Activated CD8-positive, alpha-beta T cell treated with anti-CD3 and anti-CD28 coated beads, Interleukin-2, amount 10 ng/mL, durations not matched to agents 7 days and 5 days (primary cell): ENCODE measurements at regions of chr12 and their contacts with region 1.

Region 1: GRCh38 chr12:2944401-2945047 is 14.7 kb upstream of the TEAD4 start:
- DNase-seq: peak; percentile 72
- ATAC-seq: peak; percentile 85
- H3K4me3 Mint-ChIP-seq: no peak overlapping the region
- H3K27ac Mint-ChIP-seq: no peak overlapping the region
- H3K4me1 Mint-ChIP-seq: no peaks in the 10 kb centered on the region
- H3K27me3 Mint-ChIP-seq: peaks cover 3% of the 10 kb centered on the region

Region 2: GRCh38 chr12:2845280-2845679 is 99.2 kb before region 1 on chr12:
- CTCF ChIA-PET with region 1: interaction called, 11 read pairs
- POLR2A ChIA-PET with region 1: no interaction called
- DNase-seq: no peak
- ATAC-seq: no peak
- H3K4me3 Mint-ChIP-seq: no peak overlapping the region
- H3K27ac Mint-ChIP-seq: no peak overlapping the region
- H3K4me1 Mint-ChIP-seq: no peaks in the 10 kb centered on the region
- H3K27me3 Mint-ChIP-seq: no peaks in the 10 kb centered on the region

Region 3: GRCh38 chr12:2853626-2854025 is 90.9 kb before region 1 on chr12:
- CTCF ChIA-PET with region 1: interaction called, 17 read pairs
- POLR2A ChIA-PET with region 1: no interaction called
- DNase-seq: peak; percentile 54
- ATAC-seq: peak; percentile 65
- H3K4me3 Mint-ChIP-seq: no peak overlapping the region
- H3K27ac Mint-ChIP-seq: no peak overlapping the region
- H3K4me1 Mint-ChIP-seq: no peaks in the 10 kb centered on the region
- H3K27me3 Mint-ChIP-seq: no peaks in the 10 kb centered on the region

Region 4: GRCh38 chr12:2884810-2885209 is 59.7 kb before region 1 on chr12:
- CTCF ChIA-PET with region 1: interaction called, 16 read pairs
- POLR2A ChIA-PET with region 1: no interaction called
- DNase-seq: no peak
- ATAC-seq: no peak
- H3K4me3 Mint-ChIP-seq: no peak overlapping the region
- H3K27ac Mint-ChIP-seq: peak overlapping the region; percentile 74
- H3K4me1 Mint-ChIP-seq: peaks cover 54% of the 10 kb centered on the region
- H3K27me3 Mint-ChIP-seq: no peaks in the 10 kb centered on the region

Region 5: DNA sequence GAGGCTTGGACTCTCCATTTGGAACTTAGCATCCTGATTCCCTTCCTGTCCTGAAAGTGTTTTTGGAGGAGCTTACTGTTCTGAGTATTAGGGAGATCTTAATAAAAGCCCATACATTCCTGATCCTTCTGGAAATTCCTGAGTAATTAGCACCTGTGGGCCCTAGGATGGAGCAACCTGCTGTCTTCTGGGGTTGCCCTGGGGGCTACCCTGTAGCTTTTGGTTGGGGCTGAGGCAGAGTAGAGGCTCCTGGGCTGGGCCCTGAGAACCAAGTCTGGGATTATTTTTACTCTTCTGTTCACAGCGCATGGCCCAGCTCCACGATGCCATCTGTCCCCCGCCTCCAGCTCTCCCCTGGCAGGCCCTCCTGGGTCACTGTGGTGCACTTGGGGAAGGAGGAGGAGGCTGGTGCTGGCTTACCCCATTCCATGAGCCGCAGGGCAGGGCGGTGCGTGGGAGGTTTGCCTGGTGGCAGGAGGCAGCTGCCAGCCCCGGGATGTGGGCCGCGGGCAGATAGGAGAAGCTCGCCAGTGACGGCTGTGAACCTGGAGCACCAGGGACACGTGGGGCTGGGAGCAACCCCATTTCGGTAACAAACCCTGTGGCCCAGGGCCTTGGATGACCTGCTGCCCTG is 37.7 kb after region 1 on chr12:
- CTCF ChIA-PET with region 1: no interaction called
- POLR2A ChIA-PET with region 1: no interaction called
- DNase-seq: no peak
- ATAC-seq: no peak
- H3K4me3 Mint-ChIP-seq: no peak overlapping the region
- H3K27ac Mint-ChIP-seq: no peak overlapping the region
- H3K4me1 Mint-ChIP-seq: no peaks in the 10 kb centered on the region
- H3K27me3 Mint-ChIP-seq: peaks cover 2% of the 10 kb centered on the region

Region 6: GRCh38 chr12:3020850-3021435 is 76.4 kb after region 1 on chr12:
- CTCF ChIA-PET with region 1: no interaction called
- POLR2A ChIA-PET with region 1: no interaction called
- DNase-seq: no peak
- ATAC-seq: no peak
- H3K4me3 Mint-ChIP-seq: no peak overlapping the region
- H3K27ac Mint-ChIP-seq: no peak overlapping the region
- H3K4me1 Mint-ChIP-seq: no peaks in the 10 kb centered on the region
- H3K27me3 Mint-ChIP-seq: no peaks in the 10 kb centered on the region